ENCODE measurements at regions of chr2 and their contacts with region 1.

Region 1: GRCh38 chr2:75416420-75417342 is 144.1 kb downstream of the EVA1A start:
- DNase-seq: peak; percentile 55
- ATAC-seq: peak; percentile 93
- H3K4me3 ChIP-seq: peak overlapping the region; percentile 42 to 72 (median 61)
- H3K4me3 Mint-ChIP-seq: peak overlapping the region; percentile 93
- H3K27ac ChIP-seq: peak overlapping the region; percentile 57 to 78
- H3K27ac Mint-ChIP-seq: peak overlapping the region; percentile 94
- H3K4me1 ChIP-seq: peaks cover 24 to 25% of the 10 kb centered on the region in 2 donors
- H3K4me1 Mint-ChIP-seq: peaks cover 49% of the 10 kb centered on the region
- H3K27me3 ChIP-seq: no peaks in the 10 kb centered on the region
- H3K27me3 Mint-ChIP-seq: peaks cover 2% of the 10 kb centered on the region
- CTCF ChIP-seq: no peak

Region 2: DNA sequence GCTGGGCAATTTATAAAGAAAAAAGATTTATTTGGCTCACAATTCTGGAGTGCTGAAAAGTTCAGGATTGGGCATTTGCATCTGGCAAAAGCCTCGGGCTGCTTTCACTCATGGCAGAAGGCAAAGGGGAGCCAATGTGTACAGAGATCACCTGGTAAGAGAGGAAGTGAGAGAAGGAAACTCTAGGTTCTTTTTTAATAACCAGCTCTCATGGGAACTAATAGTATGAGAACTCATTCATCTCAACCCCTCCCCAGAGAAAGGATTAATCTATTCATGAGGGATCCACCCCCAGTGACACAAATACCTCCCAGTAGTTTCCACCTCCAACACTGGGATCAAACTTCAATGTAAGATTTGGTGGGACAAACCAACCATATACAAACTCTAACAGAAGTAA is 15.1 kb after region 1 on chr2:
- CTCF ChIA-PET with region 1: interaction called, 7 read pairs
- POLR2A ChIA-PET with region 1: interaction called, 4 read pairs
- intact Hi-C with region 1: loop called (anchors 1 kb)
- DNase-seq: peak; percentile 60
- ATAC-seq: peak; percentile 90
- H3K4me3 ChIP-seq: no peak overlapping the region
- H3K4me3 Mint-ChIP-seq: peak overlapping the region; percentile 85
- H3K27ac ChIP-seq: peak overlapping the region; percentile 32 to 61
- H3K27ac Mint-ChIP-seq: peak overlapping the region; percentile 90
- H3K4me1 ChIP-seq: peaks cover 55 to 59% of the 10 kb centered on the region in 2 donors
- H3K4me1 Mint-ChIP-seq: peaks cover 68% of the 10 kb centered on the region
- H3K27me3 ChIP-seq: no peaks in the 10 kb centered on the region
- H3K27me3 Mint-ChIP-seq: no peaks in the 10 kb centered on the region
- CTCF ChIP-seq: no peak

Region 3: DNA sequence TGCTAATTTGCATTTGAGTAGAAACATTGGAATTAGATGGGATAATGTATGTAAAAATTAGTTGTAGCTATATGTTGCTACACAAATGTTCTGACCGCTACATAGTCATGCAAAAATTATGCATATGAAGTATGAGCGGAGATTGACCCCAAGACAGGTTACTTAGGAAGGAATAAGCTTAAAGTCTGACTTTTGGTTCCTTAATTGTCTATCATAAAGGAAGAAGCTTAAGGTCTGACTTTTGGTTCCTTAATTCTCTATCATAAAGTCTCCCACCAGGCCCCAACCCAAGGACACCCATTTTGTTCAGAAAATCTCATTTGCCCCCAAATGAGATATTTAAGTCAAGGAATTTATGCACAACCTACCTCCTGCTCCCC is 37.5 kb after region 1 on chr2:
- CTCF ChIA-PET with region 1: no interaction called
- POLR2A ChIA-PET with region 1: no interaction called
- intact Hi-C with region 1: loop called (anchors 5 kb)
- DNase-seq: no peak
- ATAC-seq: no peak
- H3K4me3 ChIP-seq: no peak overlapping the region
- H3K4me3 Mint-ChIP-seq: no peak overlapping the region
- H3K27ac ChIP-seq: no peak overlapping the region
- H3K27ac Mint-ChIP-seq: no peak overlapping the region
- H3K4me1 ChIP-seq: peaks cover 3 to 4% of the 10 kb centered on the region in 2 donors
- H3K4me1 Mint-ChIP-seq: peaks cover 11% of the 10 kb centered on the region
- H3K27me3 ChIP-seq: peaks cover 0 to 4% (median 0%) of the 10 kb centered on the region in 4 experiments
- H3K27me3 Mint-ChIP-seq: peaks cover 13% of the 10 kb centered on the region
- CTCF ChIP-seq: no peak

Region 4: DNA sequence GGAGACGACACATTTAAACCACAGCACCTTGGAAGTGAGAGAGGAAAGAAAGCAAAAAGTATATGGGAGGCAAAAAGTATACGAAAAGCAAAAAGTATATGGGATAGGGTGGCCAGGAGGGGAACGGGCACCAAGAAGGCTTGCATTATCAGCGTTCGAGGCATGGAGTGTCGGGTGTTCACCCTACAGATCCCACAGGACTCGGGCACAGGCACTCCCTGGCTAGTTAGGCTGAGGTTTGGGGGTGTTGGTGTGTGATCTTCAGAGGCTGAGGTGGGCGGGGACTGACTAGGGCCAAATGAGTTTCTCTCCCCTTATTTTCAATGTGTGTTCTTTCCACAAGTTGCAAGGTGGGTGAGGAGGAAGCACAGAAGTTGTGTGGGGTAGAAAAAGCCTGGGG is 57.4 kb after region 1 on chr2:
- CTCF ChIA-PET with region 1: no interaction called
- POLR2A ChIA-PET with region 1: no interaction called
- intact Hi-C with region 1: no loop called
- DNase-seq: no peak
- ATAC-seq: no peak
- H3K4me3 ChIP-seq: no peak overlapping the region
- H3K4me3 Mint-ChIP-seq: no peak overlapping the region
- H3K27ac ChIP-seq: no peak overlapping the region
- H3K27ac Mint-ChIP-seq: no peak overlapping the region
- H3K4me1 ChIP-seq: no peaks in the 10 kb centered on the region
- H3K4me1 Mint-ChIP-seq: no peaks in the 10 kb centered on the region
- H3K27me3 ChIP-seq: peaks cover 0 to 6% (median 0%) of the 10 kb centered on the region in 4 experiments
- H3K27me3 Mint-ChIP-seq: peaks cover 23% of the 10 kb centered on the region
- CTCF ChIP-seq: no peak

Region 5: DNA sequence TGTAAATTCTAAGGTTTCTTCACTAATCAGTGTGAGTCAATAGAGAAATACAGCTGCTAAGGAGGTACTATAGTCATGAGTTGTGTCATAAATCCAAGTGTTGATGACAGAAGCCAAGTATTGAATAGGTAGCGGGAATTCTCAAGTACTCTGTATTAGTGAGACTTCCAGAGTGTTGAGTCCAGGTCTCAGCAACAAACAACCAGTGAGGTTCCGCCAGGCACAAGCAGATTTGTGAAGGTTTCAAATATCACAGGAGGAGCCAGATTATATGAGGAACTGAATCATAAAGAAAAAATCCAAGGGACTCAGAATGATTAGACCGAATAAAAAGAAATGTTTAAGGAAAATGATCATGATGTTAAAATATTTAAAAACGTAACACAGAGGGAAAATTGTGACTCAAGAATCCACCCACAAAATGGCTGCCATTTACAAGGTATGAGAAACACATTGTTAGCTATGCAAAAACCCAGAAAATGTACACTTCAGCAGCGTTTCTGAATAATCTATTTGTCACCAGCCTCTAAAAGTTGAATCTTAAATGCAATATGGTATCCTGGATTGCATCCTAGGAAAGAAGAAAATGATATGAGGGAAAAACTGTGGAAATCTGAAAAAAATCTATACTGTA is 171.4 kb after region 1 on chr2:
- CTCF ChIA-PET with region 1: no interaction called
- POLR2A ChIA-PET with region 1: no interaction called
- intact Hi-C with region 1: no loop called
- DNase-seq: no peak
- ATAC-seq: no peak
- H3K4me3 ChIP-seq: no peak overlapping the region
- H3K4me3 Mint-ChIP-seq: no peak overlapping the region
- H3K27ac ChIP-seq: no peak overlapping the region
- H3K27ac Mint-ChIP-seq: no peak overlapping the region
- H3K4me1 ChIP-seq: no peaks in the 10 kb centered on the region
- H3K4me1 Mint-ChIP-seq: no peaks in the 10 kb centered on the region
- H3K27me3 ChIP-seq: peaks cover 0 to 3% (median 1%) of the 10 kb centered on the region in 4 experiments
- H3K27me3 Mint-ChIP-seq: peaks cover 22% of the 10 kb centered on the region
- CTCF ChIP-seq: no peak

Measured in B cell (primary cell).